ENCODE measurements at regions of chr15 and their contacts with region 1.

Region 1: GRCh38 chr15:33226559-33227181 is 32.2 kb upstream of the FMN1 start:
- DNase-seq: peak; percentile 21
- H3K4me3 ChIP-seq: no peak overlapping the region
- H3K27ac ChIP-seq: no peak overlapping the region
- H3K27me3 ChIP-seq: no peaks in the 10 kb centered on the region
- CTCF ChIP-seq: peak; percentile 58

Region 2: GRCh38 chr15:33700695-33701304 is 474.1 kb after region 1 on chr15:
- in situ Hi-C with region 1: loop called (anchors 25 kb)
- DNase-seq: peak; percentile 85
- H3K4me3 ChIP-seq: no peak overlapping the region
- H3K27ac ChIP-seq: no peak overlapping the region
- H3K27me3 ChIP-seq: peaks cover 3% of the 10 kb centered on the region
- CTCF ChIP-seq: peak; percentile 98

Measured in brain microvascular endothelial cell (primary cell).